Natural killer cell (primary cell): ENCODE measurements at regions of chr2 and their contacts with region 1.

Region 1: GRCh38 chr2:241443486-241444223 is 64.7 kb downstream of the STK25 start:
- DNase-seq: peak; percentile 80 to 95
- ATAC-seq: peak; percentile 92 to 94 (median 92)
- H3K4me3 ChIP-seq: no peak overlapping the region
- H3K4me3 Mint-ChIP-seq: peak overlapping the region; percentile 72
- H3K27ac ChIP-seq: no peak overlapping the region
- H3K27ac Mint-ChIP-seq: peak overlapping the region; percentile 78 to 86
- H3K4me1 ChIP-seq: peaks cover 31% of the 10 kb centered on the region
- H3K4me1 Mint-ChIP-seq: peaks cover 19 to 21% of the 10 kb centered on the region in 2 donors
- H3K27me3 ChIP-seq: peaks cover 41% of the 10 kb centered on the region
- H3K27me3 Mint-ChIP-seq: peaks cover 12 to 14% of the 10 kb centered on the region in 2 donors
- CTCF ChIP-seq: no peak

Region 2: DNA sequence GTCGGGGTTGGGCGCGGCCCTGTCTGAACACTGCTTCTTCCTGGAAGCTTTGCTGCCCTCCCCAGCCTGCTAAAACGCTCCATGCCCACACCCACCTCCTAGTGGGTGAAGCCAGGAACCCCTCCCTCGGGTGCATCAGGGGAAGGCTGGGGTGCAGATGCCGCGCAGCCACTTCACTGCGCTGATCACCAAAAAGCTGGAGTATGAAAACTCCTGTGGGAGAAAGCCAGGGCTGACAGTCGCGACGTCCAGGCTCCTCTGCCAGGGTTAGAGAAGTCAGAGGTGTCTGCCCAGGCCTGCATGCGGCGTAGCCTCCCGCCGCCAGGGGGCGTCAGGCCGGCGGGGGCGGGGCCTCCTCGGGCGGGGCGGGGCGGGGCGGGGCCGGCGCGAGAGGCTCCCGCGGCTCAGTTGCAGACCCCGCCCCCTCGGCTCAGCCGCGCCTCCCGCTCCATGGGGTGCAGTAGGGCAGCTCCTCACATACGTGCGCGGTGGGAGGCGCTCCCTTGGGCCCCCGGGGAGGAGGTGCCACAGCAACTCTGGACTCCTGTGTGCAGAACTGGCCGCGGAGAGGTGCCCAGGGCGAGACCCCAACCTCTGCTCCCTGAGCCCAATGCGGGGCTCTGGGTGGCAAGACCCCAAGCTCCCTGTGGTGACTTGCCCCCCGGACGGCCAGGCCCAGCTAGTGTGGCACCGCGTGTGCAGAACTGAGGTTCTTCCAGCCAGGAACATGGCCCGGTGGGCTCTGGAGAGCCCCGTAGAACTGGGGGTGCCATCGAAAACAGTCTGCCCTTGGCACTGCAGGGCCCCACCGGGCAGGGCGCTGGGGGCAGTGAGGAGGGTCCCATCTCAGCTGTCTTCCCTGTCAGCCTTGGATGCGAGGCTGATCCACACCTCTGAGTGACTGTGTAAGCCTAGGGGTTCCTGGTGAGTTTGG is 877.2 kb before region 1 on chr2:
- intact Hi-C with region 1: loop called (anchors 5 kb)
- DNase-seq: peak; percentile 91 to 96
- ATAC-seq: peak; percentile 56 to 80 (median 63)
- H3K4me3 ChIP-seq: peak overlapping the region; percentile 76
- H3K4me3 Mint-ChIP-seq: peak overlapping the region; percentile 96
- H3K27ac ChIP-seq: peak overlapping the region; percentile 93
- H3K27ac Mint-ChIP-seq: peak overlapping the region; percentile 99
- H3K4me1 ChIP-seq: peaks cover 87% of the 10 kb centered on the region
- H3K4me1 Mint-ChIP-seq: peaks cover 69 to 79% of the 10 kb centered on the region in 2 donors
- H3K27me3 ChIP-seq: no peaks in the 10 kb centered on the region
- H3K27me3 Mint-ChIP-seq: no peaks in the 10 kb centered on the region
- CTCF ChIP-seq: peak; percentile 98

Region 3: GRCh38 chr2:241417626-241418025 is 26.0 kb before region 1 on chr2:
- intact Hi-C with region 1: no loop called
- DNase-seq: no peak
- ATAC-seq: no peak
- H3K4me3 ChIP-seq: no peak overlapping the region
- H3K4me3 Mint-ChIP-seq: no peak overlapping the region
- H3K27ac ChIP-seq: no peak overlapping the region
- H3K27ac Mint-ChIP-seq: no peak overlapping the region
- H3K4me1 ChIP-seq: no peaks in the 10 kb centered on the region
- H3K4me1 Mint-ChIP-seq: no peaks in the 10 kb centered on the region
- H3K27me3 ChIP-seq: no peaks in the 10 kb centered on the region
- H3K27me3 Mint-ChIP-seq: no peaks in the 10 kb centered on the region
- CTCF ChIP-seq: no peak

Region 4: DNA sequence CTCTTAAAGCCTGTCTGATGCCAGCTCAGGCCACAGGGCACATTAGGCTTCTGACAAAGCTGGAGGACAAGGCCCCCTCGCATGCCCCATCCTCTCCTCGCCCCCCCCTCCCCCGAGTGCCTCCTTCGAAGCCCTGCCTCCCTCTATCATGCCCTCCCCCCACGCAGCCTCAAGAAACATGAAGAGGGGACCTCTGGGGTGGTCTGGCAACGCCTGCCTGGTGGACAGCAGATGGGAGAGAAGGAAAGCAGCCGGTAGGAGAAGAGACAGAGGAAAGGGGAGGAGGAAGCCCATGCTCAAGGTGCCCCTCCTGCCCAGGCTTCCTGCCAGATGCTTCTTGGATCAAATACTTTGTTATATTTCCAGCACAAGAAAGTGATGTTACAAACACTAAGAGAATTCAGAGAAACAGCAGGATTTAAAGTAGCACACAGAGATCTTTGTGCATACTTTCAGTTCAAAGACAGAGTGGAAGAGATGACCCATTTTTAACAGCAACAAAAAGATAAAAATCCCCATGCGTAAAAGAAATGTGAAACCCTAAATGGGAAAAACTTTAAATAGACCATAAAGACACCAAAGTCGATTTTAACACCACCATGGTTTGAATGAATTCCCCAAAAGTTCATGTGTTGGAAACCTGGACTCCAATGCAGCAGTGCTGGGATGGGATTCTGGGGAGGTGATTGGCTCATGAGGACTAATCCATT is 133.9 kb after region 1 on chr2:
- intact Hi-C with region 1: no loop called
- DNase-seq: no peak
- ATAC-seq: no peak
- H3K4me3 ChIP-seq: no peak overlapping the region
- H3K4me3 Mint-ChIP-seq: no peak overlapping the region
- H3K27ac ChIP-seq: no peak overlapping the region
- H3K27ac Mint-ChIP-seq: no peak overlapping the region
- H3K4me1 ChIP-seq: no peaks in the 10 kb centered on the region
- H3K4me1 Mint-ChIP-seq: peaks cover 0 to 11% of the 10 kb centered on the region in 2 donors
- H3K27me3 ChIP-seq: no peaks in the 10 kb centered on the region
- H3K27me3 Mint-ChIP-seq: no peaks in the 10 kb centered on the region
- CTCF ChIP-seq: no peak